ENCODE measurements at regions of chr12 and their contacts with region 1.

Region 1: DNA sequence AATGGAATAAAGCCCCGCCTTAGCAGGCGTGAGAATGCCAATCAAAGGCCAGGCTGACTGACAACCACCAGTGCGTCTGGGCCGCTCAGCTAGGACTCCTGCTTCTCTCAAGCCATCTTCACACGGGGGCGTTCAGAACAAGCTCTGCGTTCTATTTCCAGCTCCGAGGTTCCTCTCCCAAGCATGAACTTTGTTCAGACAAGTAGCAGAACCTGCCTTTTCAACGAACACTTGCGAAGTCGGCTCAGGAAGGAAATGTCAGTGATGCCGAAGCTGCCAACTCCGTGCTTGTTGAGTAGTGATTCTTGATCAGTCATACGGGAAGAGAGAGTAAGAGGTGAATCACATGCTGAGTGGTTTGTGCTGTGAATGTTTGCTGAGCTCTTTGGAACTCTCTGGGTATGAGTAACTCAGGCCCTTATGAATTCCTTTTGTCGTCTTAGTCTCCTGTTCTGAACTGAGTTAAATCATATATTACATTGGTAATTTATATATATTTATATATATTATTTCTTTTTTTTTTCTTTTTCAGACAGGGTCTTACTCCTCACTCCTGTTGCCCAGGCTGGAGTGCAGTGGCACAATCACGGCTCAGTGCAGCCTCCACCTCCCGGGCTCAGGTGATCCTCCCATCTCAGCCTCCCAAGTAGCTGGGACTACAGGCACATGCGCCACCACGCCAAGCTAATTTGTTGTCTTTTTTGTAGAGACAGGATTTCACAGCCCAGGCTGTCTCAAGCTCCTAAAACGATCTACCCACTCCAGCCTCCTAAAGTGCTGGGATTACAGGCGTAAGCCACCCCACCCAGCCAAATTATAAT is 29.4 kb upstream of the BCL7A start:
- DNase-seq: peak; percentile 85
- ATAC-seq: peak; percentile 94
- H3K4me3 ChIP-seq: peak overlapping the region in 1 of 2 experiments; percentile 4; a peak in 1 of 4 replicates
- H3K27ac ChIP-seq: peak overlapping the region; percentile 44
- H3K4me1 ChIP-seq: peaks cover 3% of the 10 kb centered on the region; the same call in 1 of the 2 replicates
- H3K27me3 ChIP-seq: no peaks in the 10 kb centered on the region
- CTCF ChIP-seq: no peak

Region 2: DNA sequence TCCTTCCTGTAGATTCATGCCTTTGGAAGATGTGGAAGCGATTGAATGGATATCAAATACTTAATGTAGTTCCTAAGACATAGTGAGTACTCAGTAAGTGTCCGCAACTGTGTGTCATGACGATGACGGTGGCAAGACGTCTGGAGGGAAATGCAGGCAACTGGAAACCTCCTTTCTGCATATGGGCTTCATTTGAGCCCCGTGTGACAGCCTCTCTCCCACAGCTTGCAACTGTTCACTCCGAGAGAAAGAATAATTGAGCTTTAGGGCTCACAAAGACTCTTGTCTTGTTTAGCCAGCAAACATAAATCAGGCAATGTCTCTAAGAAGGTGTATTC is 66.9 kb before region 1 on chr12:
- CTCF ChIA-PET with region 1: no interaction called
- POLR2A ChIA-PET with region 1: interaction called, 3 read pairs
- in situ Hi-C with region 1: no loop called
- intact Hi-C with region 1: loop called (anchors 10 kb)
- DNase-seq: no peak
- ATAC-seq: peak; percentile 23; the same call in 1 of the 2 replicates
- H3K4me3 ChIP-seq: no peak overlapping the region
- H3K27ac ChIP-seq: peak overlapping the region; percentile 82
- H3K4me1 ChIP-seq: peaks cover 10% of the 10 kb centered on the region
- H3K27me3 ChIP-seq: no peaks in the 10 kb centered on the region
- CTCF ChIP-seq: no peak